ENCODE measurements at regions of chr5 and their contacts with region 1.

Region 1: DNA sequence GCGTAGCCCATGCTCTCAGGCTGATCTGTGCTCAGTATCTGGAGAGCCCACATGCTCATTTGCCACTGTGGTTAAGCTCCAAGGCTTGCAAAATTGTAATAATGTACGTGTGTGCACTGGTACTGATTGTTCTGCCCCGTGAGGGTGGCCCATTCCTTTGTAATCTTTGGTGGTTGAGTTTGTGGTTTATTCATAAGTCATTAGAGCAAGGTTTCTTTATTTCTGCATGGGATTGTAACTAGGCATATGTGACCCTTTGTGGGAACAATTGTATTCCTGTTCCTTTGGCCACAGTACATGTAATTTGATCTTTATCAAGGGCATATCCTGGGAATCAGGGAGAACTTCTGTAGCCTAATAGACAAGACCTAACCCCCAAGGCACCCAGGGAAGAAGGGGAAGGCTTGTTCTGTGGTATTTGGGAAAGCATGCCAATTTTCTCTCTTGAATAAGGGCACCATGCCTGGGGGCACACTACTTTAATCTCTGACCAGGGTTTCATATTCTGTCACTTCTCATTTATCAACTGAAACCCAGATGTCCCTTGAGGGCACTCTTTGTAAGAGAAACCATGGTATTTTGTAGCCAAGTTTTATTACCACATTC is 74.6 kb downstream of the NPR3 start:
- DNase-seq: no peak

Region 2: GRCh38 chr5:32773944-32774343 is 11.8 kb before region 1 on chr5:
- intact Hi-C with region 1: loop called (anchors 1 kb)
- DNase-seq: no peak

Measured in cardiac septum (tissue), 1 donor.